Transverse colon (tissue), 4 donors: ENCODE measurements at regions of chr19 and their contacts with region 1.

Region 1: DNA sequence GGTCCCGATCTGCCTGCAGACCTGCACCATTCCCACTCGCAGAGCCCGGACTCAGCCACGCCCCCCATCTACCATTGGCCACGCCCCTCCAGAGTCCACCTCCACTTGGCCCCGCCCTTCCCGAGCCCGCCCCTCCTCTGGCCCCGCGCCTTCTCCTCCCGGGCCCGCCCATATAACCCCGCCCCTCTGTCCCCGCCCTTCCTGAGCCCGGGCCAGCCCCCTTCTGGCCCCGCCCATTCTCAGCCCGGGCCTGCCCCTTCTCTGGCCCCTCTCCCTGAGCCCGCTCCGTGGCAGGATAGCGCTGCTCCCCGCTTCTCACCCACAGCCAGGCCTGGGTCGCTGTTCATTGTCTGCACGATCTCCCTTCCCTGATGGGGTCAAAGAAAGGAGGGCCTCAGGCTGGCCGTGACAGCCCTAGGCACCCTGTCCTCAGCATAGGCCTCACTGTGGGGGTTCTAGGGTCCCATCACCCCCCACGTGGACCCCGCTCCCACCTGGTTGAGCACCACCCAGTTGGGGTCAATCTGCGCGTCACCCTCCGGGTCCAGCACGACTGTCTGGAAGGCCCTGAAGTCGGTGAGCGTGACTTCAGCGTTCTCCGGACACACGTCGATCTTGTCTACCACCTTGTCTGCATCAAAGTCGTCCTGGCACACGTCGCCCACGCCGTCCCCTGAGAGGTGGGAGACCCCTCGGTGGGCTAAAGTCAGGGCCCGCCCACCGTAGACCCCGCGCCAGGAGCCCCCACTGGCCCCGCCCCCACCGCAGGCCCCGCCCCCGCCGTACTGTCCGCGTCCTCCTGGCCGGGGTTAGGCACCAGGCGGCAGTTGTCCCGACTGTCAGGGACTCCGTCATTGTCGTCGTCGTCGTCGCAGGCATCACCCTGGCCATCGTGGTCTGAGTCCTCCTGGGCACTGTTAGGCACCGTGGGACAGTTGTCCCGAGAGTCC is 5.7 kb downstream of the COMP start:
- DNase-seq: peak; percentile 88
- H3K4me3 ChIP-seq: peak overlapping the region in 1 of 4 donors; percentile 3
- H3K27ac ChIP-seq: no peak overlapping the region
- H3K4me1 ChIP-seq: peaks cover 10 to 32% (median 25%) of the 10 kb centered on the region in 4 donors
- H3K27me3 ChIP-seq: peaks cover 53% of the 10 kb centered on the region
- CTCF ChIP-seq: no peak
- EP300 ChIP-seq: no peak
- POLR2A ChIP-seq: no peak

Region 2: GRCh38 chr19:18637644-18638630 is 147.5 kb before region 1 on chr19:
- in situ Hi-C with region 1: no loop called
- intact Hi-C with region 1: loop called (anchors 1 kb)
- DNase-seq: peak; percentile 61
- H3K4me3 ChIP-seq: peak overlapping the region in 3 of 4 donors; percentile 82 to 90 (median 87)
- H3K27ac ChIP-seq: peak overlapping the region; percentile 88 to 89 (median 89)
- H3K4me1 ChIP-seq: peaks cover 16 to 36% (median 25%) of the 10 kb centered on the region in 4 donors
- H3K27me3 ChIP-seq: no peaks in the 10 kb centered on the region
- CTCF ChIP-seq: no peak
- EP300 ChIP-seq: no peak
- POLR2A ChIP-seq: no peak